Heart left ventricle (tissue), 16 donors: ENCODE measurements at regions of chr20 and their contacts with region 1.

Region 1: DNA sequence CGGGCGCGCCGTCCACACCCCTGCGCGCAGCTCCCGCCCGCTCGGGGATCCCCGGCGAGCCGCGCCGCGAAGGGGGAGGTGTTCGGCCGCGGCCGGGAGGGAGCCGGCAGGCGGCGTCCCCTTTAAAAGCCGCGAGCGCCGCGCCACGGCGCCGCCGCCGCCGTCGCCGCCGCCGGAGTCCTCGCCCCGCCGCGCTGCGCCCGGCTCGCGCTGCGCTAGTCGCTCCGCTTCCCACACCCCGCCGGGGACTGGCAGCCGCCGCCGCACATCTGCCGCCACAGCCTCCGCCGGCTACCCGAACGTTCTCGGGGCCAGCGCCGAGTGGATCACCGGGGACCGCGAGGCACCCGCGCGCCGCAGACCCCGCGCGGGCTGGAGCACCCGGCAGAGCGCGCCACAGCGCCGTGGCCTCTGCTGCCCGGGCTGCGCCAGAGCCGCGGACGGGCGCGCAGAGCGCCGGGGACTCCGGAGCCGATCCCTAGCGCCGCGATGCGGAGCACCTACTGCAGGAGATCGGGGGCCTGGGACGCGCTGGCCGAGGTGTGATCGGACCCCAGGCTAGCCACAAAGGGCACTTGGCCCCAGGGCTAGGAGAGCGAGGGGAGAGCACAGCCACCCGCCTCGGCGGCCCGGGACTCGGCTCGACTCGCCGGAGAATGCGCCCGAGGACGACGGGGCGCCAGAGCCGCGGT is at the start of gene BMP2:
- DNase-seq: peak; percentile 55 to 76 (median 63)
- ATAC-seq: peak; percentile 58 to 85 (median 76)
- H3K4me3 ChIP-seq: peak within 1 kb of the TSS; percentile 59 to 89 (median 75)
- H3K27ac ChIP-seq: peak within 1 kb of the TSS; percentile 19 to 82 (median 63)
- H3K4me1 ChIP-seq: peaks cover 0 to 28% (median 8%) of the 10 kb centered on the region in 12 donors
- H3K27me3 ChIP-seq: peaks cover 0 to 47% (median 0%) of the 10 kb centered on the region in 9 donors
- CTCF ChIP-seq: peak in 1 of 12 donors; percentile 3
- POLR2A ChIP-seq: no peak
- total RNA-seq, gene BMP2: 0.72 to 6.2 (median 2.3) TPM

Region 2: DNA sequence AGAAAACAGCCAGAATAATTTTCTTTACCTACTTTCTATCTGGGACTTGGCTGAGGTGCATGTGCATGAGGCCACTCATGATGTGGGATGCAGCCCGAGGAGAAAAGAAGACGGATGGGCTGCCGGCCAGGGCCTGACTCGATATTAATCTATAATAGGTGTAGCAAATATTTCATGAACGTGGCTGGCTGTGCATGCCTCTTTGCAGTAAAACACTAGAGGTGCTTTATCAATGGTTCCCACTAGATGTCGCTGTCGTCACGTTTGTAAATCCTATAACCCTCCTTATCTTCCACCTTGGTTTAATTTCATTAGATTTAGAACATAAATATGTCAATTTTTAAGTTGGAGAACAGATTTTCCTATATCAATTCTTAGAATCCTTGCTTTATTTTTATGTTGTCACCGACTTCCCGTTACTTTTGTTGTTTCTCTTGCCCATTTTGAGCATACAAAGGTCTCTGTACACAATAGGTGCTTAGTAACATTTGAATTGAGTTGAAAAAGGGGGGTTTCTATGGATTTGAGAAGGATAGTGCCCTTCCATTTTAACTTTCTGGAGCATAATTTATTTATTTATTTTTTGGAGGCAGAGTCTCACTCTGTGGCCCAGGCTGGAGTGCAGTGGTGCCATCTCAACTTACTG is 625.2 kb before region 1 on chr20:
- intact Hi-C with region 1: loop called in 1 of 10 experiments (anchors 5 kb)
- DNase-seq: peak in 2 of 5 donors; percentile 28 to 34
- ATAC-seq: peak in 3 of 4 donors; percentile 60 to 63 (median 62)
- H3K4me3 ChIP-seq: no peak overlapping the region
- H3K27ac ChIP-seq: no peak overlapping the region
- H3K4me1 ChIP-seq: no peaks in the 10 kb centered on the region
- H3K27me3 ChIP-seq: peaks cover 0 to 6% (median 0%) of the 10 kb centered on the region in 9 donors
- CTCF ChIP-seq: peak; percentile 71 to 90 (median 84)
- POLR2A ChIP-seq: no peak

Region 3: GRCh38 chr20:6636209-6637159 is 131.2 kb before region 1 on chr20:
- intact Hi-C with region 1: loop called in 6 of 10 experiments (anchors 5 to 10 kb)
- DNase-seq: peak in 2 of 5 donors; percentile 30 to 41
- ATAC-seq: peak; percentile 75 to 91 (median 84)
- H3K4me3 ChIP-seq: no peak overlapping the region
- H3K27ac ChIP-seq: peak overlapping the region in 2 of 12 donors; percentile 2 to 9
- H3K4me1 ChIP-seq: peaks cover 0 to 7% (median 0%) of the 10 kb centered on the region in 12 donors
- H3K27me3 ChIP-seq: no peaks in the 10 kb centered on the region
- CTCF ChIP-seq: peak in 11 of 12 donors; percentile 30 to 66 (median 45)
- POLR2A ChIP-seq: no peak

Region 4: DNA sequence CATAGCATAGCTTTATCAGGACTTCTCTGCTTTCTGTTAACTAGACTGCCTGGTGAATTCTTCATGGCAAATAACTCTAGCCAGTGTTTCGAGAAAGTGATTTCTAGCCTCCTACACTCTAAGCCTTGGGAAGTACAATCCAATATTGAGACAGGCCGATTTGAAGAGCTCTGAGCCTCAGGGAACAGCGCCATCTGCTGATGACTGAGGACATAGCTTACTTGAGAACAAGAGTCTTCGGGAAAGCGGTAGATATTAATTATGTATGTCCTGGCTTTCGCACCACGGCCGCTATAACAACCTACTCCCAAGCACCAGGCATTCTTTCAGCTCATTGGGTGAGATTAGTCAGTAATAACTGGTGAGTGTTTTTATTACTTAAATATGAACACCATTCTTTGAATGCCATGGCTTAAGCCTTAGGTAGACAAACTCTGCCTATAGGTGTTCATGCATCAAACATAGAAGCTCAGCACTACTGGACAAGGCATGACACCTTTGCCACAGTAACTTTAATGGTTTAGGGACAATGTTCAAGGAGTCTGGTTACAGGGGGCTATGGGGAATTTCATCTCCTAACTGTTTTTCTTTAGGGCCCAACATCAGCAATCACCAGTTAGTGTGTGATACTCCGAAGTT is 518.4 kb after region 1 on chr20:
- intact Hi-C with region 1: loop called in 5 of 10 experiments (anchors 2 to 10 kb)
- DNase-seq: peak; percentile 59 to 77 (median 67)
- ATAC-seq: peak; percentile 47 to 93 (median 87)
- H3K4me3 ChIP-seq: no peak overlapping the region
- H3K27ac ChIP-seq: no peak overlapping the region
- H3K4me1 ChIP-seq: no peaks in the 10 kb centered on the region
- H3K27me3 ChIP-seq: no peaks in the 10 kb centered on the region
- CTCF ChIP-seq: peak; percentile 76 to 92 (median 80)
- POLR2A ChIP-seq: no peak

Region 5: DNA sequence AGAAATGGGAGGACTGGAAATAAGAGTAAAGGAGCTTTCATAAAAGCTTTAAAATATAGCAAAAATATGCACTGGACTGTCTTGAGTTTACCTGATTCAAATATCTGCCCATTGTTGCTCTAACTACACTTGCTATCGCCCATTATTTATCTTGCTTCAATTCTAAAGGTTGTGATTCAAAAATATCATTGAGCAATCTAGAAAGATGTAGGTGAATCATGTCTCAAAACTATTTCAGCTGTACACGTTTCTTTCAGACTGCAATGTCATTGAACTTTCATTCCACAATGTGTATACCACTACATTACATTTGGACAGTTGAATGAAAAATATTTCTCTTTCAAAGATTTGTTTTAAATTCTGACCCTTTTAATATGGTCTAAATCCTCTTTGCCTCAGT is 545.4 kb after region 1 on chr20:
- intact Hi-C with region 1: no loop called
- DNase-seq: no peak
- ATAC-seq: no peak
- H3K4me3 ChIP-seq: no peak overlapping the region
- H3K27ac ChIP-seq: no peak overlapping the region
- H3K4me1 ChIP-seq: no peaks in the 10 kb centered on the region
- H3K27me3 ChIP-seq: no peaks in the 10 kb centered on the region
- CTCF ChIP-seq: no peak
- POLR2A ChIP-seq: no peak

Region 6: GRCh38 chr20:7859356-7859802 is 1091.7 kb after region 1 on chr20:
- intact Hi-C with region 1: loop called in 3 of 10 experiments (anchors 5 to 10 kb)
- DNase-seq: peak in 2 of 5 donors; percentile 22 to 29
- ATAC-seq: peak; percentile 55 to 86 (median 74)
- H3K4me3 ChIP-seq: no peak overlapping the region
- H3K27ac ChIP-seq: no peak overlapping the region
- H3K4me1 ChIP-seq: peaks cover 0 to 7% (median 4%) of the 10 kb centered on the region in 12 donors
- H3K27me3 ChIP-seq: peaks cover 0 to 5% (median 0%) of the 10 kb centered on the region in 9 donors
- CTCF ChIP-seq: peak; percentile 17 to 68 (median 56)
- POLR2A ChIP-seq: no peak

Region 7: DNA sequence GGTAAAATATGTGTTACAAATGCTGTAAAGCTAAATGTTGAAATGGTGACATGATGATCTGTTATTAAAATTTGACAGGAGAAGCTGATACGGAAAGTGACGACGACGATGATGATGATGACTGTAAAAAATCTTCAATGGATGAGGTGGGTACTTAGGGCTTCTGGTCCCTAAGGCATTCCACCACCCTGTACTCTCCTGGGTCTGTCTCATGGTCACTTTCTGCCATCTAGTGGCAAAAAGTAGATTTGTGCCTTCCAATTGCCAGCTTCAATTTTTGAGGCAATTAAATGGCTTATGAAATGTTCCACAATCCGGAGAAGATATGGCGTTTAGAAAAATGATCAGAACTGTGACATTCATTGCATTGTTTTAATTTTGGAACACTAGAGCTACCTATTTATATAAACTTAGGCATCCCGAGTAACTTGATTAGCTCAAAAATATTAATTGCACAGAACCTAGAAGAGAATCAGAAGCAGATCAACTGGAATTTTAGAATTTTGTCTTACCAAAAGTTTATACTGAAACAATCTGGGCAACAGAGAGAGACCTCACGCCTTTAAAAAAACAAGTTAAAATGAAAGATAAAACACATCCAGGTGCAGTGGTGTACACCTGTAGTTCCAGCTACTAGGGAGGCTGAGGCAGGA is 1954.7 kb after region 1 on chr20:
- intact Hi-C with region 1: loop called in 1 of 10 experiments (anchors 5 kb)
- DNase-seq: peak in 2 of 5 donors; percentile 26 to 27
- ATAC-seq: peak; percentile 53 to 86 (median 81)
- H3K4me3 ChIP-seq: no peak overlapping the region
- H3K27ac ChIP-seq: no peak overlapping the region
- H3K4me1 ChIP-seq: peaks cover 0 to 2% (median 0%) of the 10 kb centered on the region in 12 donors
- H3K27me3 ChIP-seq: no peaks in the 10 kb centered on the region
- CTCF ChIP-seq: peak; percentile 64 to 87 (median 80)
- POLR2A ChIP-seq: no peak